Endothelial cell of umbilical vein (primary cell): ENCODE measurements at regions of chr14 and their contacts with region 1.

Region 1: DNA sequence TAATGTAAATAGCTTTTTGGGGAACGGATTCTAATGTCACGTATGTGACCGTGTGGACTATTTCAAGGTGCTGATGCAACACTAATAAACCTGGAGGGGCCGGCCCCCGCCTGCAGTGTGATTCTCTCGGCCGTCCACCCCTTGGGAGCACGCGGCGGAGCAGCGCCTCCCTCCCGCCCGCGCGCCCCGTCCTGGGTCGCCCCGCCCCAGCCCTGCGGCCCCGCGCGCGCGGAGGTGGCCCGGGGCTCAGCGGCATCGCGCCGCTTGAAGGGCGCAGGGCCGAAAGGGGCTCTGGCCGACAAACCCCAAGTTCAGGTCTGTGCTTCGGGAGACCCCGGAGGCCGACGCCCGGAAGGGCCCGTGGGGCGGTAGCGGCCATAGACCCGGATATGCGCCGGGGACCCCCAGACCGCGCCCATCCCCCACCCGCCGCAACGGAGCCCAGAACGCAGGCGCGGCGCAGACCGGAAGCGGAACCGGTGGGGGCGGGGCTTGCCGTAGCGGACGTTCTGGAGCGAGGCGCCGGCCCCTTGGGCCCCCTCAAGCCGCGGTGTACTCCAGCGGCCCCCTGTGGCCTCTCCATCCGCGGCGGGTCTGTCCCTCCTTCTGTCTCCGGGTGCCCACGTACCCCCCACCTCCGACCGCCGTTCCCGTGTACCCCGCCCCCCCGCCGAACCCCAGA is at the start of gene TEX22:
- DNase-seq: peak; percentile 79
- H3K4me3 ChIP-seq: peak within 1 kb of the TSS; percentile 51 to 67 (median 62)
- H3K27ac ChIP-seq: peak within 1 kb of the TSS; percentile 60
- H3K4me1 ChIP-seq: peaks cover 21% of the 10 kb centered on the region
- H3K27me3 ChIP-seq: no peaks in the 10 kb centered on the region
- CTCF ChIP-seq: peak in 1 of 2 donors; percentile 37
- POLR2A ChIP-seq: peak; percentile 89
- total RNA-seq, gene TEX22: 1.1 and 2.1 TPM in 2 replicates

Region 2: DNA sequence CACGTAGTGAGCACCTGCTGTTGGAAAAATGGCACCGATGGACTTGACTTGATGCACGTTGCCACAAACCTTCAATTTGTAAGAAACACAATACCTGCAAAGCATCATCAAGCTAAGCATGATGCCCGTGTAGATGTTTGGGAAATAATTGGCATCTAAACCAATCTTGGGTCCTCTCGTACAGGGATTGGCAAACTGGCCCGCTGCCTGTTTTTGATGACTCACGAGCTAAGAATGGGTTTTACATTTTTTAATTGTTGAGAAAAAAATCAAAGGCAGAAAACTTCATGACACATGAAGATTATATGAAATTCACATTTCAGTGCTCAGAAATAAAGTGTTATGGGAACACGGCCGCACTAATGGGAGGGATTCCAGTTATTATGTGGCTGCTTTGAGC is 32.4 kb after region 1 on chr14:
- CTCF ChIA-PET with region 1: no interaction called
- POLR2A ChIA-PET with region 1: no interaction called
- dilution Hi-C with region 1: no loop called
- intact Hi-C with region 1: loop called (anchors 5 kb)
- DNase-seq: peak; percentile 90
- H3K4me3 ChIP-seq: no peak overlapping the region
- H3K27ac ChIP-seq: peak overlapping the region; percentile 86
- H3K4me1 ChIP-seq: peaks cover 34% of the 10 kb centered on the region
- H3K27me3 ChIP-seq: no peaks in the 10 kb centered on the region
- CTCF ChIP-seq: no peak
- POLR2A ChIP-seq: peak; percentile 20

Region 3: DNA sequence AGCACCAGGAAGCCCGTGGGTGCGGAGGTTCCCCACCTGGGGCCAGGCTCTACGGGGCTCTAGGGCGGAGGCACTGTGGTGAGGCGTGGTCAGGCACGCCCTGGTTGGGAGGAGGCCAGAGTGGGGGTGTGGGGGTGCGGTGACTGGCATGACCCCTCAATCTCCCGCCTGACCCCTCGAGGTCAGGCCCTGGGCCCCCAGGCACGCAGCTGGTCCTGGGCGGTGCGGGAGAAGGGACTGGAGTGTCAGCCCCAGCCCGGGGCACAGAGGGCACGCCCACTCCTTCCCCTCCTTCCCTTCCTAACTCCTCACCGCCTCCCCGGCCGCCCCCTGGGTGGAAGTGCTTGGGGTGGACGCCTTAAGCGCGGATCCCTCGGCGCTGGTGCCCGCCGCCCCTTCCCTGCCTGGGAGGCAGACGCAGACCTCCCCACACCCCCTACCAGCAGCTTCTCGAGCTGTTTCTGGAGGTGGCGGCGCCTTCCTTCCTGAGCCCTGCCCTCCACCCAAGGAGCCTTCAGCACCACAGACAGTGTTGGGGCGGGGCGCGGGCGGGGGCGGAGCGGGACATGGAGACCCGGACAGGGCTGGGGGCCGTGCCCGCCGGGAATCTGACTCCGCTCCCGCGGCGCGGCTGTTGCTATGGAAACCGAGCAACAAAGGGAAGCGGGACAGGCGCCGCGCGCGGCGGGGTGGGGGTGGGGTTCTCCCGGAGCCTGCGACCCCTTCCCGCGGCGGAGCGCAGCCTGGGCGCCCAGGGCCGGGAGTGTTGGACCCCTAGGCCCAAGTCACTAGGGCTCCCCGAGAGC is 75.7 kb after region 1 on chr14:
- CTCF ChIA-PET with region 1: no interaction called
- POLR2A ChIA-PET with region 1: no interaction called
- dilution Hi-C with region 1: no loop called
- intact Hi-C with region 1: loop called (anchors 2 kb)
- DNase-seq: peak; percentile 91
- H3K4me3 ChIP-seq: peak overlapping the region; percentile 21 to 93 (median 34)
- H3K27ac ChIP-seq: peak overlapping the region; percentile 90
- H3K4me1 ChIP-seq: peaks cover 19% of the 10 kb centered on the region
- H3K27me3 ChIP-seq: no peaks in the 10 kb centered on the region
- CTCF ChIP-seq: no peak
- POLR2A ChIP-seq: no peak